ENCODE measurements at regions of chr14 and their contacts with region 1.

Region 1: GRCh38 chr14:104768437-104769323 is 15.7 kb downstream of the SIVA1 start:
- DNase-seq: peak; percentile 71 to 84
- ATAC-seq: peak; percentile 91 to 94
- H3K4me3 ChIP-seq: no peak overlapping the region
- H3K27ac ChIP-seq: peak overlapping the region in 2 of 4 donors; percentile 36 to 37
- H3K4me1 ChIP-seq: no peaks in the 10 kb centered on the region
- H3K27me3 ChIP-seq: no peaks in the 10 kb centered on the region
- CTCF ChIP-seq: peak; percentile 73 to 98 (median 92)
- POLR2A ChIP-seq: no peak

Region 2: DNA sequence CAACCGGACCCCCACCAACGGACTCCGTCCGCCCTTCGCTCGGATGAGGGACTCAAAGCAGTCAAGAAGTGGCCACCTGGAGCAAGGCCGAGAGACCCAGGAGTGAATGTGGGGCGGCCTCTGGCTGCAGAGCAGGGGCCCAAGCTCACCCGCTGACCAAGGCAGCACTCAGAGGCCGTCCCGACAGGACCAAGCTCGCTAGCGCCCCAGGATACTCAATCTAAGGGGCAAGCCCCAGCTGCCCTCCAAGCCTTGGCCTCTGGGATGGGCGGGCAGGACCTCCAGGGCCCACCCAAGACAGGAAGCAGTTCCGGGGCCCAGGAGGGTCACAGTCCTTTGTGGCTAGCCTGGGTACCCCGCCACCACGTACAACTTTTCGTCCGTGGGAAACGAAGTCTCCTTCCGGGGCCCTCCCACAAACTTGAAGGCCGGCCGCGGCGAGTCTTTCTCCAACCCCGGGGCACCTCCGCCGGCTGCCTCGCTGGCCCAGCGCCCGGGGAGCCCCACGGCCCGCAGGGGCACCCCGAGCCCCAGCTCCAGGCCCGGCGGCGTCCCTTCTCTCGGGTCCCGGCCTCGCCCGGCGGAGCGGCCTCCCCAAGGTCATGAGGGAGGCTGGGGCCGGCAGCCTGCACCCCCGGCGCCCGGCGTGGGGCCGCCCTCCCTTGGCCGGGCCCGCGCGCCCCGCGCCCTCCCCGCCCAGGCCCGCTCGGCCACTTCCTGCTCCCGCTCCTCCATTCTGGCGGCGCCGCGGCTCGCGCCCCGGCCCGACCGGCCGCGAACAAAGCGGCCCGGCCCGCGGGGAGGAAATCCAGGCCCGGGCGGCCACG is 26.2 kb after region 1 on chr14:
- in situ Hi-C with region 1: no loop called
- intact Hi-C with region 1: loop called (anchors 1 kb)
- DNase-seq: no peak
- ATAC-seq: peak; percentile 29 to 30
- H3K4me3 ChIP-seq: peak overlapping the region; percentile 60 to 89 (median 68)
- H3K27ac ChIP-seq: peak overlapping the region; percentile 47 to 69 (median 66)
- H3K4me1 ChIP-seq: peaks cover 37 to 38% of the 10 kb centered on the region in 2 donors
- H3K27me3 ChIP-seq: no peaks in the 10 kb centered on the region
- CTCF ChIP-seq: no peak
- POLR2A ChIP-seq: no peak

Region 3: GRCh38 chr14:104820669-104821228 is 52.1 kb after region 1 on chr14:
- in situ Hi-C with region 1: loop called in 3 of 4 experiments (anchors 5 kb)
- intact Hi-C with region 1: no loop called
- DNase-seq: no peak
- ATAC-seq: no peak
- H3K4me3 ChIP-seq: no peak overlapping the region
- H3K27ac ChIP-seq: no peak overlapping the region
- H3K4me1 ChIP-seq: peaks cover 11 to 15% of the 10 kb centered on the region in 2 donors
- H3K27me3 ChIP-seq: peaks cover 0 to 4% (median 3%) of the 10 kb centered on the region in 3 donors
- CTCF ChIP-seq: peak in 1 of 5 experiments; percentile 18
- POLR2A ChIP-seq: no peak

Region 4: GRCh38 chr14:104826189-104826860 is 57.6 kb after region 1 on chr14:
- in situ Hi-C with region 1: loop called in 3 of 4 experiments (anchors 5 kb)
- intact Hi-C with region 1: loop called (anchors 1 kb)
- DNase-seq: peak; percentile 71 to 81
- ATAC-seq: peak; percentile 94 to 95
- H3K4me3 ChIP-seq: peak overlapping the region; percentile 56 to 76 (median 62)
- H3K27ac ChIP-seq: peak overlapping the region in 1 of 4 donors; percentile 26
- H3K4me1 ChIP-seq: peaks cover 0 to 18% of the 10 kb centered on the region in 2 donors
- H3K27me3 ChIP-seq: peaks cover 0 to 4% (median 3%) of the 10 kb centered on the region in 3 donors
- CTCF ChIP-seq: peak; percentile 46 to 95 (median 87)
- POLR2A ChIP-seq: no peak